ENCODE measurements at regions of chr19 and their contacts with region 1.

Region 1: DNA sequence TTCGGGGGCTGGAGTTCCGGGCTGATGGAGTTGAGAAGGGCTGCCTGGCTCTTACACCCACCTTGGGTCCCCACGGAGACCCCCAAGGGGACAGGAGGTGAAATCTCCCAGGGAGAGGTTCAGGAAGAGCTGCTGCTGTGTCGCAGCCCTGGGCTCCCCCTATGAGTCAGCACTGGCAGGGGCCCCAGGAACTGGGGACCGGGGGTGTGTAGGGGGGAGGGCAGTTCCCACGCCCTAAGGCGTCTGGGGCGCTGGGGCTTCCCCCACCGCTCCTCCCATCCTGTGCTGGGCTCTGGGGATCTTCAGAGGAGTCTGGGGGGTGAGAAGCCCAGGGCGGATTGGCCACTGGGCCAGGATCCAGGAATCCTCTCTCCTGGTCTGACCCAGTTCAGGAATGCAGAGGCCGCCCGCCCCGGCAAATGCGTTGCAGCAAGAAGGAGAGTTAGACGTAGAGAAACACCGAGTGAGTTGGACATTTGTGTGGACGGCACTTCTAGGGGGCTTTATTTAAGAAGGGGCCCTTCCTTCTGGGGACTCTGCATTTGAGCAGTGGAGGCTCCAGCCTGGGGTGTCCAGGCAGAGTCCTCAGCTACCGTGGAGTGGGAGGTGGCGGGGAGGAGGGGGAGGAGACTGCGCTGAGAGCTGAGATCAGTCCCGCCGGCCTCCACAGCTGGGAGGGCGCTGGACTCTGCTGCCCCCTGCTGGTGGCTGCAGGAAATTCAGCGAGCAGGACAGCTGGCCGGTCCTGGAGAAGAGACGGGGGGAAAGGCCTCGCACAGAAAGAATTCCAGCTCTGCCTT is 15.0 kb upstream of the NANOS3 start:
- DNase-seq: peak; percentile 92 to 98 (median 97)
- ATAC-seq: peak; percentile 94 to 95
- H3K4me3 ChIP-seq: peak overlapping the region; percentile 29
- H3K27ac ChIP-seq: peak overlapping the region; percentile 94
- H3K4me1 ChIP-seq: no peaks in the 10 kb centered on the region
- H3K27me3 ChIP-seq: no peaks in the 10 kb centered on the region

Region 2: GRCh38 chr19:13597640-13598039 is 264.3 kb before region 1 on chr19:
- intact Hi-C with region 1: loop called in 3 of 4 experiments (anchors 10 kb)
- DNase-seq: peak in 1 of 3 donors; percentile 26
- ATAC-seq: peak; percentile 87
- H3K4me3 ChIP-seq: no peak overlapping the region
- H3K27ac ChIP-seq: no peak overlapping the region
- H3K4me1 ChIP-seq: no peaks in the 10 kb centered on the region
- H3K27me3 ChIP-seq: no peaks in the 10 kb centered on the region

Region 3: DNA sequence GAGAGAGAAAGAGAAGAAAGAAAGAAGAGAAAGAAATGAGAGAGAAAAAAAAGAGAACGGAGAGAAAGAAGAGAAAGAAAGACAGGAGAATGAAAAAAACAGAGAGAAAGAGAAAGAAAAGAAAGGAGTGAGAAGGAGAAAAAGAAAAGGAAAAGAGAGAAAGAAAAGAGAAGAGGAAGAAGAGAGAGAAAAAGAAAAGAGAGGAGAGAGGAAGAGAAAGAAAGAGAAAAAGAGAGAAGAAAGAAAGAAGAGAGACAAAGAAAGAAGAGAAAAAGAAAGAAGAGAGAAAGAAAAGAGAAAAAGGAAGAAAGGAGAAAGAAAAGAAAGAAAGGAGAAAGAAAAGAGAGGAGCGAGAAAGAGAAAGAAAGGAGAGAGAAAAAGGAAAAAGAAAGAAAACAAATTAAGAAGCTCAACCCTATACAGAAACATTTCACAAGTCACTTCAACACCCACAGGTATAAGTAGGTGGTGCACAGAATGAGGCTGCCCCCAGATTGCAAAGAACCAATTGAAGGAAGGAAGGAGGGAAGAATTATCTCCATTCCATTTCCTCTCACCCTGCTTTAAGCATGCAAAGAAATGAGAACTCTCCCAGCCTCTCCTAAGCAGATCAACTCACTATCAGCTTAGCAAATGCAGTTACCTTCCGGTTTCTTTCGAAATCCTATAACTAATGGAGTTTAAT is 256.9 kb before region 1 on chr19:
- intact Hi-C with region 1: loop called in 1 of 4 experiments (anchors 10 kb)
- DNase-seq: no peak
- ATAC-seq: no peak
- H3K4me3 ChIP-seq: no peak overlapping the region
- H3K27ac ChIP-seq: no peak overlapping the region
- H3K4me1 ChIP-seq: no peaks in the 10 kb centered on the region
- H3K27me3 ChIP-seq: no peaks in the 10 kb centered on the region

Region 4: GRCh38 chr19:13784731-13785452 is 77.0 kb before region 1 on chr19:
- intact Hi-C with region 1: loop called (anchors 2 to 5 kb)
- DNase-seq: peak; percentile 79 to 92 (median 91)
- ATAC-seq: peak; percentile 51 to 66
- H3K4me3 ChIP-seq: no peak overlapping the region
- H3K27ac ChIP-seq: no peak overlapping the region
- H3K4me1 ChIP-seq: no peaks in the 10 kb centered on the region
- H3K27me3 ChIP-seq: no peaks in the 10 kb centered on the region

Region 5: DNA sequence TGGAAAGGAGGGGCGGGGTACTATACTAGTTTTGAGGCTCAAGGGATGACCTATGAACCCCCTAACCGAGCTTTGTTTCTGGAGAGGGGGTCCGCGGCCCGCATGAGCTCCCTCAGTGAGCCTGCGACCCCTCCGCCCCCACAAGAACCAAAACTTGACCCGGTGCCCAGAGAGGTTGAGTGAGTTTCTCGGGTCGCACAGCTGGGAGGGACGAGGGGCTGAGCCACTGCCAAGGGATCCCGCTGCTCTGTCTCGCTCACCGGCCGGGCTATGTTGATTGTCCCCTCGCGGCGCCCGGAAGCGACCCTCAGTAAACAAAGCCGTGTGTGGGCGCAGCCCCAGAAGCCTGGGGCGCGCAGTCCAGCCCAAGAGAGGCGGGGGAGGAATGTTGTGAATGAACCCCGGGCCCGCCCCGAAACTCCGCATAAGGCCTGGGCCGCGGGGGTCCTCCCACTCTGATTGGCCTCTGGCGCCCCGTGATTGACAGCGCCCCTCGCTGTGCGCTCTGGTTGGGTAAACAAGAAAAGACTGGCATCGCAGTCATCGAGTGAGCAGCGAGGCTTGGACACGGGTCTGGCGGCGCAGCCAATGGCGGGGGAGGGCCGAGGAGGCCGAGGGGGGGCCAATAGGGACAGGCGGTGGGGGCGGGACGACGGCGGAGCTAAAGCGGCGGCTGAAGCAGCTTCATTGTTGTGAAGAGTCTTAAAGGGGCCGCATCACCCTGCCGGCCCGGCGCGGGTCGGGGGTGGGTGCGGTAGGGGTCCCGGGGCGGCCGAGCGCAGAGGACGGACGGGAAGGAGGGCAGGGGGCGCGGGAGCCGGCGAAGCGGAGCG is 67.0 kb before region 1 on chr19 and contains the start of gene ZSWIM4:
- intact Hi-C with region 1: loop called in 2 of 4 experiments (anchors 5 kb)
- DNase-seq: peak; percentile 99 to 100 (median 100)
- ATAC-seq: peak; percentile 97 to 98
- H3K4me3 ChIP-seq: peak within 1 kb of the TSS; percentile 97
- H3K27ac ChIP-seq: peak within 1 kb of the TSS; percentile 86
- H3K4me1 ChIP-seq: peaks cover 6% of the 10 kb centered on the region
- H3K27me3 ChIP-seq: no peaks in the 10 kb centered on the region
- total RNA-seq, gene ZSWIM4: 3.4 to 6.4 (median 3.5) TPM